ENCODE measurements at regions of chr17 and their contacts with region 1.

Region 1: GRCh38 chr17:55717898-55718735 is 4.5 kb downstream of the TMEM100 start:
- DNase-seq: peak; percentile 84
- H3K4me3 Mint-ChIP-seq: no peak overlapping the region
- H3K27ac Mint-ChIP-seq: no peak overlapping the region
- H3K4me1 Mint-ChIP-seq: peaks cover 2% of the 10 kb centered on the region
- H3K27me3 Mint-ChIP-seq: peaks cover 15% of the 10 kb centered on the region

Region 2: GRCh38 chr17:55533608-55534007 is 184.5 kb before region 1 on chr17:
- CTCF ChIA-PET with region 1: interaction called, 35 read pairs
- intact Hi-C with region 1: no loop called
- DNase-seq: no peak
- H3K4me3 Mint-ChIP-seq: no peak overlapping the region
- H3K27ac Mint-ChIP-seq: no peak overlapping the region
- H3K4me1 Mint-ChIP-seq: no peaks in the 10 kb centered on the region
- H3K27me3 Mint-ChIP-seq: peaks cover 2% of the 10 kb centered on the region

Region 3: DNA sequence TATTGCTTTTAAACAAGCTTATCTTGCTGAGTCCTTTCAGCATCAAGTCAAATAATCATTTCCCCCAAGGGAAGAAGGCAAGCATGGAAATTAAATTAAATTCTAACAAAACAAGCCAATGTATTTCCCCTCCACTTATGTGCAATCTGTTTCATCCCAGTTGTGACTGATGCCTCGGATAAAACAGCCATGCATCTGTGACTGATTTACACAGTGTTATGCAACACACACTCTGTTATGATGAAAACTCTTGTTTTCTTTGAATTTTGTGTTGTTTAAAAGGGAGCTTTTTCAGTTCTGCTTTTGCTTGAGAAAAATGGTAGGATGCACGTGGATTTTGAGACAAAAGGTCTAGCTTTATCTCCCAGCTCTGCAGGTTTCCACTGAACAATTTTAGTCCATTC is 28.0 kb before region 1 on chr17:
- CTCF ChIA-PET with region 1: no interaction called
- intact Hi-C with region 1: no loop called
- DNase-seq: no peak
- H3K4me3 Mint-ChIP-seq: no peak overlapping the region
- H3K27ac Mint-ChIP-seq: no peak overlapping the region
- H3K4me1 Mint-ChIP-seq: no peaks in the 10 kb centered on the region
- H3K27me3 Mint-ChIP-seq: peaks cover 24% of the 10 kb centered on the region

Region 4: DNA sequence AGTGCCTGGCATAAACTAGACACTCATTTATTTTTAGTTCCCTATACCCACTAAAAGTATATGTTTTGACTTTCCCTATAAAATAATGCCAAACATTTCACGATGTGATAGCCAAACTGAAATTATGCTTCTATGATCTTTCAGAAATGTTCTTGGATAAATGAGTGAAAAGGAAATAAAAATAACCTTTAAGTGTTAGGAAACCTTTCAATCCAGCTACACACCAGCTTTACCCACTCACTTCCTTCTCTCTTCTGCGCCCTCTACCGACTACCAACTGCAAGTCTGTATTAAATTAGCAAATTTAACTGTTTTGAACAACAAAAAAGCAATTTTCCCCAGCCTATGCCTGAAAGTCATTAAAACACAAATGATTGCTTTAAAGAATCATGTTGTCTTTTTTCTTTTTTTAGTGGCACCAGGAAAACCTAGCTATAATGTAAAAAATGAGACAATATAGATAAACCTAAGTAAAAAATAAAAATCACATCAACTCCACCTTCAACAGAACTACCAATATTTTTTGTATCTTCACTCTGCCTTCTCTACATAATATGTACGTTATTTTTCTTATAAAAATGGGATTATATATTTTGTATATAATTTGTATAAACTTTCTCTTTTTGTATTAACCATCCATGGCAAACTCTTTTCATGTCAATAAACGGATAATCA is 17.8 kb after region 1 on chr17:
- CTCF ChIA-PET with region 1: interaction called, 14 read pairs
- intact Hi-C with region 1: no loop called
- DNase-seq: peak; percentile 64
- H3K4me3 Mint-ChIP-seq: no peak overlapping the region
- H3K27ac Mint-ChIP-seq: no peak overlapping the region
- H3K4me1 Mint-ChIP-seq: peaks cover 30% of the 10 kb centered on the region
- H3K27me3 Mint-ChIP-seq: peaks cover 27% of the 10 kb centered on the region

Region 5: DNA sequence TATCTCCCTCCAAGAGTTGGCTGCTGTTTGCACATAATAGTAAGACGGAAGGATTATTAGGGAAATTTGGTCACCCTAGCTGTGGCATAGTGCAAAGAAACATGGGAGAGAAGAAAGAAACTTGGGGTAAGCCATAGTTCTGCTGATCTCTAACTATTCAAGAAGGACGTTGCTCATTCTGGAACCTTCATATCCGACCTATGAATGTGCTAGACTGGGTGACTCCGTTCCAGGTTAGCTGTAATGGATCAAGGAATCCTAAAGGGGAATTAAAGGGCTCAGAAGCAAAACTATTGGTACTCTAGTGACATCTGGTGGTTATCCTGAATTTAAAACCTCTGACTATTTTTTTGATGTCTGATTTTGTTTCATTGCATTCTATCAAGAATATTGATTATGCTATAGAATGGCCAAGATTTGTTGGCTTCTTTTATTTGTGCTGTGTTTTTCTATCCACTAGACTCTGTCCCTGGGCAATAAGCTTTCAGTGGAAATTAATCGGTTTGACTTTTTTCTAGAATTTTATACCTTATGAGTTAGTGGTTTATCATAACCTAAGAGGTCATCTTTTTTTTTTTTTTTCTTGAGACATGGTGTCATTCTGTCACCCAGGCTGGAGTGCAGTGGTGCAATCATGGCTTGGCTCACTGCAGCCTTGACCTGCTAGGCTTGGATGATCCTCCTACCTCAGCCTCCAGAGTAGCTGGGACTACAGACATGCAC is 52.2 kb after region 1 on chr17:
- CTCF ChIA-PET with region 1: interaction called, 10 read pairs
- intact Hi-C with region 1: no loop called
- DNase-seq: no peak
- H3K4me3 Mint-ChIP-seq: no peak overlapping the region
- H3K27ac Mint-ChIP-seq: no peak overlapping the region
- H3K4me1 Mint-ChIP-seq: no peaks in the 10 kb centered on the region
- H3K27me3 Mint-ChIP-seq: no peaks in the 10 kb centered on the region

Region 6: GRCh38 chr17:55870044-55870443 is 151.9 kb after region 1 on chr17:
- CTCF ChIA-PET with region 1: no interaction called
- intact Hi-C with region 1: no loop called
- DNase-seq: no peak
- H3K4me3 Mint-ChIP-seq: no peak overlapping the region
- H3K27ac Mint-ChIP-seq: no peak overlapping the region
- H3K4me1 Mint-ChIP-seq: no peaks in the 10 kb centered on the region
- H3K27me3 Mint-ChIP-seq: no peaks in the 10 kb centered on the region

Measured in activated naive CD4-positive, alpha-beta T cell treated with anti-CD3 and anti-CD28 coated beads for 36 hours (primary cell).